IMR-90 (cell line): ENCODE measurements at regions of chr1 and their contacts with region 1.

Region 1: DNA sequence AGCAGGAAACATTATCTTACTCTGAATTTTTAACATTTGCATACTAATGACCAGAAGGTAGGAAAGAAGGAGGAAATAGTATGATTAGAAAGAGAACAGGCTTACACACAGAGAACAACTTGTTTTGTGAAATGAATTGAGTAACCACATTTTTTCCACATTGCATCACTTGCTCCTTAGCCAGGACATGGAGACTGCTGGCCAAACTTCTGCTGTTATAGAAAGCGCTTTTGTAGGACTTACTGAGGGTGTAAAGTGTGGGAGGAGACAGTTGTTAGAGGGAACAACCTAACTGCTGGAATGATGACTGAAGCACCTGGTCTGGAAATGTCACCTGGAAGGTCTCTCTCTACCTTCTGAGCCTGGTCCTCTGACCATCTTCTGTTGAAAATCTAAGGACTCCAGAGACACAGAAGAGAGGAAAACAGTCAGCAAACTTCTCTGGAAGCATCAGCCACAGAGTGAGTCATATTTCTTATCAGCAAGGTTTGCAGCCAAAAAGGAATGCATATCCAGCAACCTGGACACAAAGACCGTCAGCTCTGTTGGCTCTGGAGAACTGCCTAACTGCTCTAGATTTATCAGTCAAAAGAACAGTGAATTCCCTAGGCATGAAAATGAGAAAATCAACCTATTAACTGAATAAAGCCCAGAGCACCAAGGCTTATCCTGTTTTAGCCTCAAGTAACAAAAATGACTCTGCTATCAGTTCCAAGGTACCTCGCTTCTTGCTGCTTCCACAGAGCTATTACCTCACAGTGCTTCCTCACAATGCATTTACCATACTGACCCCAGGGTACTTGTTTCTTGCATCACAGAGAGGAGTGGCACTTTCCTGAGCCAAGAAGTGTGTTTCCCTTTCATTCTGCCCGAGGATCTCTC is 88.0 kb upstream of the SLFNL1 start:
- DNase-seq: peak; percentile 95
- ATAC-seq: peak; percentile 92
- H3K4me3 ChIP-seq: peak overlapping the region; percentile 1; the same call in 1 of the 2 replicates
- H3K27ac ChIP-seq: peak overlapping the region; percentile 73
- H3K4me1 ChIP-seq: peaks cover 9% of the 10 kb centered on the region
- H3K27me3 ChIP-seq: no peaks in the 10 kb centered on the region
- CTCF ChIP-seq: no peak
- POLR2A ChIP-seq: no peak
- RAD21 ChIP-seq: no peak

Region 2: DNA sequence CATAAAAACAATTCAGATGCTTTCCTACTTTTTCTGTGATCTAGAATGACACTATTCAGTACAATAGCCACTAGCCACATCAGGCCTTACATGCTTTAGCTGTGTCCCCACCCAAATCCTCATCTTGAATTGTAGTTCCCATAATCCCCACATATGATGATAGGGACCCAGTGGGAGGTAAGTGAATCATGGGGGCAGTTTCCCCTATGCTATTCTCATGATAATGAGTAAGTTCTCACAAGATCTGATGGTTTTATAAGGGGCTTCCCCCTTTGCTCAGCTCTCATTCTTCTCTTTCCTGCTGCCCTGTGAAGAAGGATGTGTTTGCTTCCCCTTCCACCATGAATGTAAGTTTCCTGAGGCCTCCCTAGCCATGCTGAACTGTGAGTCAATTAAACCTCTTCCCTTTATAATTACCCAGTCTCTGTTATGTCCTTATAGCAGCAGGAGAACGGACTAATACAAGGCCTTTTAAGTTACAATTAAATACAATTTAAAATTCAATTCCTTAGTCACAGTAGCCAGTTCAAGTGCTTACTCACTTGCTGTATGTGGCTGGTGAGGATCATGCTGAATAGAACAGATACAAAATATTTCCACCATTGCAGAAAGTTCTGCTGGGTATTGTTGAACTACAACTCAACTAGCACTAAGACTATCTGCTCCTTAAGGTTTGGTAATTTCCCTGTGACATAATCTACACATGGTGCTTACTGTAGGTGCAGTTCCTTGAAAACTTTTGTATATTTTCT is 25.8 kb after region 1 on chr1:
- CTCF ChIA-PET with region 1: no interaction called
- POLR2A ChIA-PET with region 1: no interaction called
- dilution Hi-C with region 1: no loop called
- in situ Hi-C with region 1: no loop called
- intact Hi-C with region 1: loop called (anchors 1 kb)
- DNase-seq: no peak
- ATAC-seq: no peak
- H3K4me3 ChIP-seq: no peak overlapping the region
- H3K27ac ChIP-seq: no peak overlapping the region
- H3K4me1 ChIP-seq: no peaks in the 10 kb centered on the region
- H3K27me3 ChIP-seq: no peaks in the 10 kb centered on the region
- CTCF ChIP-seq: no peak
- POLR2A ChIP-seq: no peak
- RAD21 ChIP-seq: no peak

Region 3: GRCh38 chr1:41152622-41153044 is 43.1 kb after region 1 on chr1:
- CTCF ChIA-PET with region 1: interaction called, 3 read pairs
- POLR2A ChIA-PET with region 1: no interaction called
- dilution Hi-C with region 1: no loop called
- in situ Hi-C with region 1: no loop called
- intact Hi-C with region 1: loop called (anchors 1 kb)
- DNase-seq: peak; percentile 92
- ATAC-seq: peak; percentile 85
- H3K4me3 ChIP-seq: no peak overlapping the region
- H3K27ac ChIP-seq: peak overlapping the region; percentile 66; the same call in 1 of the 2 replicates
- H3K4me1 ChIP-seq: peaks cover 22% of the 10 kb centered on the region
- H3K27me3 ChIP-seq: no peaks in the 10 kb centered on the region
- CTCF ChIP-seq: no peak
- POLR2A ChIP-seq: no peak
- RAD21 ChIP-seq: no peak